Breast epithelium (tissue), 4 donors: ENCODE measurements at regions of chr14 and their contacts with region 1.

Region 1: GRCh38 chr14:83269583-83269982 is 1735.9 kb upstream of the SEL1L start:
- DNase-seq: no peak
- H3K4me3 ChIP-seq: no peak overlapping the region
- H3K27ac ChIP-seq: no peak overlapping the region
- H3K4me1 ChIP-seq: no peaks in the 10 kb centered on the region
- H3K27me3 ChIP-seq: no peaks in the 10 kb centered on the region
- CTCF ChIP-seq: no peak
- POLR2A ChIP-seq: no peak

Region 2: GRCh38 chr14:83196236-83196635 is 73.3 kb before region 1 on chr14:
- intact Hi-C with region 1: no loop called
- DNase-seq: no peak
- H3K4me3 ChIP-seq: no peak overlapping the region
- H3K27ac ChIP-seq: no peak overlapping the region
- H3K4me1 ChIP-seq: no peaks in the 10 kb centered on the region
- H3K27me3 ChIP-seq: no peaks in the 10 kb centered on the region
- CTCF ChIP-seq: no peak
- POLR2A ChIP-seq: no peak

Region 3: GRCh38 chr14:84622357-84622756 is 1352.8 kb after region 1 on chr14:
- intact Hi-C with region 1: loop called (anchors 5 kb)
- DNase-seq: no peak
- H3K4me3 ChIP-seq: no peak overlapping the region
- H3K27ac ChIP-seq: no peak overlapping the region
- H3K4me1 ChIP-seq: no peaks in the 10 kb centered on the region
- H3K27me3 ChIP-seq: no peaks in the 10 kb centered on the region
- CTCF ChIP-seq: no peak
- POLR2A ChIP-seq: no peak